HepG2 (cell line): ENCODE measurements at regions of chr10 and their contacts with region 1.

Region 1: DNA sequence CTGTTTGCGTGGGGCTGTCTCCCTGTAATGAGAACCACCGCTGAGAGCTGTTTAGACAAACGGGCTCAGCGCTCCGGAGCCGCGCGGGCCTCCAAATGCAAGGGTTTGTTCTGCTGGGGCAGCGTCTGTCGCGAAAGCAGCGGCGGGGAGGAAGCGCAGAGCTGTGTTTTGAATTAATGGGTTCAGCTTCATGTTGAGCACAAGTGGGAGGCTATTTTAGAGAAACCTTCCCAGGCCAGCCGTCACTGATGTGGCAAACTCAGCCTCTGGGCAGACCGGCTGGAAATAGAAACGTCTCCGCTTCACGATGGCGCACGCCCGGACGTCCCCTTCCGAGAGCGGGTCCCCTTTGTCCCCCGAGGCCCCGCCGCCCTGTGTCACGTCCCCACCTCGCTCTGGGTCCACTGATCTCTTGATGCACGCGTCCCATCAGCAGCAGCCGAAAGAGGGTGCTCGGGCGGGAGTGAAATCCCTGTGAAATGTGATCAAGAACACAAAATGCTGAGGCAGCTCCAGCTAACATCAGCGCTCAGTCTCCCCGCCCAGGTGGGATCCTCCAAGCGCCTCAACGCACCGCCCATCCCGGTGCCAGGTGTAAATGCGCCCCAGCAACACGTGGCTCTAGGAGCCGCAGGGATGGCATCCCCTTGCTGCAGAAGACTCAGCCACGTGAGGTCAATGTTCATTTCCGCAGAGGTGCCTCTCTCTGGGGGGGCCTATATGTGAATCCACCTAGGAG is 44.9 kb downstream of the BAMBI start:
- DNase-seq: no peak
- ATAC-seq: peak; percentile 88
- H3K4me3 ChIP-seq: peak overlapping the region; percentile 59 to 72 (median 63)
- H3K27ac ChIP-seq: no peak overlapping the region
- H3K4me1 ChIP-seq: peaks cover 44% of the 10 kb centered on the region
- H3K27me3 ChIP-seq: no peaks in the 10 kb centered on the region
- CTCF ChIP-seq: peak; percentile 8; the same call in 1 of the 2 replicates
- EP300 ChIP-seq: no peak
- POLR2A ChIP-seq: no peak
- RAD21 ChIP-seq: no peak

Region 2: DNA sequence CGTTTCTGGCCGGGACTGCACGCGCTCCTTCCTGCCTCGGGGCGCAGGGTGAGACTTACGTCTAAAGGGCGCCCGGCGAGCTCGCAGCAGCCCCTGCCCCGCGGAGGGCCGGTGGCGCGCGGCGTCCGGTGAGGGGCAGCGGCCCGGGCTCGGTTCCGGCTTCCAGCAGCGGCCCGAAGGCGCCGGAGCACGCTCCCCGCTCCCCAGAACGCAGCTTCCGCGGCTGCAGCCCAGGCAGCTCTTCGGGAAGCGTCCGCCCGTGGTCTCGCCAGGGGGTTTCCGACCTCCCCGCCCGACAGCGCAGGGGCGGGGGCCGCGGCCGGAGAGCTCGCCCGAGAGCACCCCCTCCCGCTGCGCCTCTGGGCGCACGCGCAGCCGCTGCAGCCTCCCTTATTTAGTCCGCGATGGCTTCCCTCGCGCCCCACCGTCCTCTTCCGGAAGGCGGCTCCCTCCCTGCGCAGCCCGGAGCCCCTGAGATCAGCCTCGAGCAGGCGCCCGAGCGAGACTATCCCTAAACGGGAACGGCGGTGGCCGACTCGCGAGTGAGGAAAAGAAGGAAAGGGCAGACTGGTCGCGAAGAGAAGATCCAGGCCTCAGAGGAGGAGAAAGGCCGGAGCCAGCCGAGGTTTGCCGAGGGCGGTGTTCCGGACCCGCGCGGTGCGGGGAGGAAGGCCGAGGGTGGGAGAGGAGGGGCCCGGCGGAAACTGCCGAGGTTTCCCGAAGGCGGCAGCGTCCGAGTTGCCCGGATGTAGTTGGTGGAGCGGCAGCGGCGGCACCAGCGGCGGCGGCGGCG is 189.7 kb before region 1 on chr10 and contains the start of gene WAC:
- CTCF ChIA-PET with region 1: no interaction called
- POLR2A ChIA-PET with region 1: no interaction called
- in situ Hi-C with region 1: no loop called
- intact Hi-C with region 1: no loop called
- DNase-seq: peak; percentile 79
- ATAC-seq: peak; percentile 93
- H3K4me3 ChIP-seq: peak within 1 kb of the TSS; percentile 94 to 98 (median 98)
- H3K27ac ChIP-seq: peak within 1 kb of the TSS; percentile 99
- H3K4me1 ChIP-seq: peaks cover 44% of the 10 kb centered on the region
- H3K27me3 ChIP-seq: no peaks in the 10 kb centered on the region; a peak in 1 of 5 replicates
- CTCF ChIP-seq: 0 out of 2 replicates have a peak, but pooled peaks have one; percentile 21
- EP300 ChIP-seq: 0 out of 4 replicates have a peak, but pooled peaks of 1 of the 2 experiments have one; percentile 13
- POLR2A ChIP-seq: peak; percentile 72 to 84
- RAD21 ChIP-seq: 0 out of 2 replicates have a peak, but pooled peaks have one; percentile 19
- total RNA-seq, gene WAC: 69.1 and 70.2 TPM in 2 replicates

Region 3: DNA sequence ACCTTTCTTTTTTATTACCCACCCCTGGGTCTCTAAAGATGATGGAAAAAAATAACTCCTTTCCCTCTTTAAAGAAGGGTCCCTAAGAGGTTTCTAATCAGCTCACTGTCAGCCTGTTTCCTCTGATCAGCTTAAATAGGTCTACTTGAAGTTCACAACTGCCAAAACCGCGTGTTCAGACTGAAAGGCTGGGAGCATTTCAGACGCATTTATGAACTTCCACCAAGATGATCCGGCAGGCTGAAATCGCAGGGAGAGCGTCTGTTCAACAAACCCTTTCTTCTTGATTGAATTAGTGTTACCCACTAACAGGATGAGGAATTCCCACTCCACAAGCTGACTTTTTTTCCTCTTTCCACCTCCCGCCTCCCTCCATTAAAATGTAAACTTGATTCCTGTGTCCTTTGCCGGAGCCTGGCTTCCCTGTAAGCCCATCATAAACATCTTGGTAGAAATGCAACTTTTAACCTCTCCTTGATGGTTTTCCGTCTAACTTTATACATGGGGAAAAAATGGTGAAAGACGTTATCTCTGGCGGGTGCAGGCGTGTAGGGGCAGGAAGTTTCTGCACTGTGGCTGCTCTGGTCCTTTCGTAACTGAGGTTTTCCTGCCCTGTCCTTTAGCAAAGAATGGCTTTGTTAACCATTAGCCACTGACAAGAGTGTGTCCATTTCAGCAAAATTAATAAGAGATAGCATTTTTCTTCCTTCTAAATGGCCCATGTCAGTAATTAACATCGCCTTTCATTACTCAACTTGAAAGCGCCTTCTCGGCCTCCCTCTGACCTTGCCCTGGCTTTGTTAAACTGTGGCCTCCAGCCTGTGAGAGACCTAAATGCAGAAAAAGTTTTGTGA is 85.8 kb after region 1 on chr10:
- CTCF ChIA-PET with region 1: no interaction called
- POLR2A ChIA-PET with region 1: no interaction called
- in situ Hi-C with region 1: no loop called
- intact Hi-C with region 1: loop called (anchors 5 kb)
- DNase-seq: peak; percentile 60
- ATAC-seq: peak; percentile 99
- H3K4me3 ChIP-seq: peak overlapping the region; percentile 28 to 61 (median 44)
- H3K27ac ChIP-seq: peak overlapping the region; percentile 43
- H3K4me1 ChIP-seq: peaks cover 48% of the 10 kb centered on the region
- H3K27me3 ChIP-seq: no peaks in the 10 kb centered on the region
- CTCF ChIP-seq: no peak
- EP300 ChIP-seq: no peak
- POLR2A ChIP-seq: peak in 1 of 2 experiments; percentile 41; a peak in 1 of 4 replicates
- RAD21 ChIP-seq: no peak